CD4-positive, alpha-beta memory T cell (primary cell): ENCODE measurements at regions of chr5 and their contacts with region 1.

Region 1: DNA sequence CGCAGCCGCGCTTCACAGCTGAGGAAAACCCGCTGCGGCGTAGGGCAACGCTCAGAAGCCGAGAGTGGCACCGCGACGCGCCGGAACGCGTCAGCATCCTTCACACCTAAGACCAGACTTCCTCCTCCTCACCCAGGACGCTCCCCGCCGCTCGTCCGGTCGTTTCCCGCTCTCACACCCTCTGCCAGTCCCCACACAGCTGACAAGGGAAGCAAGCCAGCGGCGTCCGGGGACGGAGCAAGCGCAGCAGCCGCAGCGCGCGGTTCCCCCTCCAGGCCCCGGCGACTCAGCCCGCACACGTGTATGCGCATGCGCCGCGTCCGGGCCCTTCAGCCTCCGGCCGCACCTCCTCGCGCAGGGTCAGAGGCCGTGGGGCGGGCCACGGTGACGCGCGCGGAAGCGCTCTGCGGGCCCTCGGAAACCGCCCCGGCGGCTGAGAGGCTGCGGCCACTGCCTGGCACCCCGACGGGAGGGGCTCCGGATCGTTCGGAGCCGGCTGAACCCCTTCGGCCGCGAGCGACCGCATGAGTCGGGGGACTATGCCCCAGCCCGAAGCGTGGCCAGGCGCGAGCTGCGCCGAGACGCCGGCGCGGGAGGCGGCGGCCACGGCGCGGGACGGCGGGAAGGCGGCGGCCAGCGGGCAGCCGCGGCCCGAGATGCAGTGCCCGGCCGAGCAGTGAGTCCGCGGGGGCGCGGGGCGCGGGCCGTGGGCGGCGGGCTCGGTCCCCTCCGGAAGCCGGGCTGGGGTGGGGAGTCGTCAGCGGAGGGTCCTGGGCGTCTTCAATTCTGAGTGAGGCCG is at the start of gene OTULIN:
- DNase-seq: peak; percentile 82 to 92 (median 84)
- H3K4me3 ChIP-seq: peak within 1 kb of the TSS; percentile 54 to 80
- H3K4me3 Mint-ChIP-seq: peak within 1 kb of the TSS; percentile 94 to 98 (median 96)
- H3K27ac ChIP-seq: peak within 1 kb of the TSS; percentile 81
- H3K27ac Mint-ChIP-seq: peak within 1 kb of the TSS; percentile 89 to 99 (median 96)
- H3K4me1 ChIP-seq: peaks cover 61% of the 10 kb centered on the region
- H3K4me1 Mint-ChIP-seq: peaks cover 44 to 76% (median 56%) of the 10 kb centered on the region in 4 donors
- H3K27me3 ChIP-seq: no peaks in the 10 kb centered on the region
- H3K27me3 Mint-ChIP-seq: no peaks in the 10 kb centered on the region
- total RNA-seq, gene OTULIN: 59.4 to 69.0 TPM

Region 2: GRCh38 chr5:14142827-14143548 is 521.5 kb before region 1 on chr5 and contains the start of gene TRIO:
- CTCF ChIA-PET with region 1: no interaction called
- POLR2A ChIA-PET with region 1: no interaction called
- intact Hi-C with region 1: loop called (anchors 10 kb)
- DNase-seq: peak; percentile 54 to 68 (median 62)
- H3K4me3 ChIP-seq: peak within 1 kb of the TSS; percentile 57 to 68
- H3K4me3 Mint-ChIP-seq: peak within 1 kb of the TSS; percentile 81 to 88 (median 85)
- H3K27ac ChIP-seq: no peak within 1 kb of the TSS
- H3K27ac Mint-ChIP-seq: peak within 1 kb of the TSS in 4 of 7 donors; percentile 42 to 78 (median 64)
- H3K4me1 ChIP-seq: peaks cover 11% of the 10 kb centered on the region
- H3K4me1 Mint-ChIP-seq: peaks cover 7 to 21% (median 11%) of the 10 kb centered on the region in 4 donors
- H3K27me3 ChIP-seq: peaks cover 11% of the 10 kb centered on the region
- H3K27me3 Mint-ChIP-seq: peaks cover 20 to 27% of the 10 kb centered on the region in 2 donors
- total RNA-seq, gene TRIO: 9.7 to 11.5 TPM

Region 3: DNA sequence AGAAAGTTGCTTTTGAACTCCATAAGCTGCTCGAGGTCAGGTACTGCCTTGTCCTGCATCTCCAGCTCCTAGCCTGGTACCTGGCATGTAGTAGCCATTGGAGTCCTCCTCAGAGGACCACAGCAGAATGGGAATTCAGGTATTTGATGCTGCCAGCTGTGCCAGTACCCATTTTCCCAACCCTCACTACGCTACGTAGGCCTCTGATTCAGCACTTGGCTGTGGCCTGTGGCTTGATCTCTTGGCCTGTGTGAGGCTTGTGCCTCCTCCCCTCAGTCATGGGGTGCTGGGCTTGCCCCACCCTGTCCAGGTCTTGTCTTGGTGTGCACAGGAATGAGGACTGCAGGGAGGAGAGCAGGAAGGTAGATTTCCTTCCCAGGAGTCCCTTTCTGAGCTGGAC is 11.8 kb after region 1 on chr5:
- CTCF ChIA-PET with region 1: interaction called, 11 read pairs
- POLR2A ChIA-PET with region 1: interaction called, 9 read pairs
- intact Hi-C with region 1: loop called (anchors 1 kb)
- DNase-seq: no peak
- H3K4me3 ChIP-seq: no peak overlapping the region
- H3K4me3 Mint-ChIP-seq: peak overlapping the region in 7 of 8 donors; percentile 65 to 78 (median 74)
- H3K27ac ChIP-seq: peak overlapping the region; percentile 61
- H3K27ac Mint-ChIP-seq: peak overlapping the region; percentile 78 to 93 (median 88)
- H3K4me1 ChIP-seq: peaks cover 57% of the 10 kb centered on the region
- H3K4me1 Mint-ChIP-seq: peaks cover 53 to 63% (median 58%) of the 10 kb centered on the region in 4 donors
- H3K27me3 ChIP-seq: no peaks in the 10 kb centered on the region
- H3K27me3 Mint-ChIP-seq: no peaks in the 10 kb centered on the region

Region 4: DNA sequence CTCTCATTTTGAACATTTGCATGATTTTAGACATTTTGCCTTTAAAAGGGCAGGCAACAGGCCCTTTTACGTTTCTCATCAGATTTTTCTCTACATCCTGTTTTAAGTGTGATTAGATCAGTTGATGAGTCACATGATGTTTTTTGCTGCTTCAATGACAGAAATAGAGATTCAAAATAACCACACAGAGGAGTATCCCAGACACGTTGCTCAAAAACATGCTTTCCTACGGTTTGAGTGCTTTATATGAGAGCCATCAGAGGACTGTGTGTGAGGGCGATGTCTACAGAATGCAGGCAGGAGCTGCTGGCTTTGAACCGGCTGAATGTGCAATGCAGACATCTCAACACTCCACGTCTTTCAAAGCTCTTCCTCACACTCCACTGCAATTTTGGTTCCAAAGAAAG is 42.1 kb after region 1 on chr5:
- CTCF ChIA-PET with region 1: interaction called, 4 read pairs
- POLR2A ChIA-PET with region 1: interaction called, 5 read pairs
- intact Hi-C with region 1: loop called (anchors 2 kb)
- DNase-seq: peak; percentile 67 to 80 (median 73)
- H3K4me3 ChIP-seq: peak overlapping the region in 1 of 2 donors; percentile 26
- H3K4me3 Mint-ChIP-seq: peak overlapping the region; percentile 81 to 90 (median 82)
- H3K27ac ChIP-seq: peak overlapping the region; percentile 49
- H3K27ac Mint-ChIP-seq: peak overlapping the region; percentile 94 to 99 (median 99)
- H3K4me1 ChIP-seq: peaks cover 76% of the 10 kb centered on the region
- H3K4me1 Mint-ChIP-seq: peaks cover 66 to 91% (median 80%) of the 10 kb centered on the region in 4 donors
- H3K27me3 ChIP-seq: no peaks in the 10 kb centered on the region
- H3K27me3 Mint-ChIP-seq: no peaks in the 10 kb centered on the region